Heart right ventricle (tissue), 16 donors: ENCODE measurements at regions of chr17 and their contacts with region 1.

Region 1: DNA sequence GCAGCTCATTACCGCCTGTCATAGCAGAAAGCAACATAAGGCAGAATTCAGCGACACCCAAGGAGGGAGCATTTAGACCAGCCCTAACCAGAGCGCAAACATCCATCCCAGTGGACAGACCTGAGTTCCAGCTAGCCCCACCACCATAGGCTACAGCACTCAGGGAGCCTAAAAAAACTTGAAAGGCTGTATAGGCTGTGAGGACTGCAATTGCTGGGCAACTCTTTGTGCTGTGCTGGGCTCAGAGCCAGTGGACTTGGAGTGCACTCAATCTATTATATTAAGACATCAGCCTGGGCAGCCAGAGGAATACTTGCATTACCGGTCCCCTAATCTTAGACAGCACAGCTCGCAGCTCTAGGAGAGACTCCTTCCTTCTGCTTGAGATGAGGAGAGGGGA is 207.3 kb downstream of the KIF2B start:
- DNase-seq: no peak
- ATAC-seq: no peak
- H3K4me3 ChIP-seq: no peak overlapping the region
- H3K27ac ChIP-seq: no peak overlapping the region
- H3K4me1 ChIP-seq: no peaks in the 10 kb centered on the region
- H3K27me3 ChIP-seq: no peaks in the 10 kb centered on the region
- CTCF ChIP-seq: no peak

Region 2: DNA sequence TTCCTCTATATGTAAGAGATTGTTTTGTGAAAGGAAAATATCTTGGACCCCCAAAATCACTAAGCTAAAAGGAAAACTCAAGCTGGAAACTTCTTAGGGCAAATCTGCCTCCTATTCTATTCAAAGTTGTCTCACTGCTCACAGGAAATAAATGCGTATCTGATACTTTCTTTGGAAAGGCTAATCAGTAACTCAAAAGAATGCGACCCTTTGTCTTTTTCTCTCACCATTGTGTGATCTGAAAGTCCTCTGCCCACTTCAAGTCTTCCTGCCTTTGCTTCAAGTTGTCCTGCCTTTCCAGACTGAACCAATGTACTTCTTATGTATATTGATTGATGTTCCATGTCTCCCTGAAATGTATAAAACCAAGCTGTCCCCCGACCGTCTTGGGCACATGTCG is 50.0 kb before region 1 on chr17:
- intact Hi-C with region 1: loop called in 1 of 10 experiments (anchors 10 kb)
- DNase-seq: no peak
- ATAC-seq: no peak
- H3K4me3 ChIP-seq: no peak overlapping the region
- H3K27ac ChIP-seq: no peak overlapping the region
- H3K4me1 ChIP-seq: no peaks in the 10 kb centered on the region
- H3K27me3 ChIP-seq: no peaks in the 10 kb centered on the region
- CTCF ChIP-seq: no peak

Region 3: DNA sequence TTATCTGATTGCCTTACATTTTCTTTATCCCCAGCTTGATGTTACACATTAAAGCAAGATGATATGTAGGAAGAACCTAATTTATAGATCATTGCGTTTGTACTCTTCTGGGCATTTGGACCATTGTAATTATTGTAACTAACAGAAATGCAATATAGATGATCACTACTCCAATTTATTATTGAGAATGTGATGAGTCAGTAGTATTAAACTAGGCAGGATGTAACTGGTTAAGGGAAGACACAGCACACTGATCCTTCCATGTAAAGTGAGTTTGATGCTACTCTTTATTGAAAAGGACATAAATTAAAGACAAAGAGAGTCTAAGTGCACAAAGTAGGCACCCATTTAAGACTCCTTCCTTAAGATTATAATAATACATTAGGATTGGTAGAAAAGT is 16.6 kb after region 1 on chr17:
- intact Hi-C with region 1: no loop called
- DNase-seq: no peak
- ATAC-seq: no peak
- H3K4me3 ChIP-seq: no peak overlapping the region
- H3K27ac ChIP-seq: no peak overlapping the region
- H3K4me1 ChIP-seq: no peaks in the 10 kb centered on the region
- H3K27me3 ChIP-seq: no peaks in the 10 kb centered on the region
- CTCF ChIP-seq: no peak

Region 4: GRCh38 chr17:54085020-54085419 is 55.0 kb after region 1 on chr17:
- intact Hi-C with region 1: no loop called
- DNase-seq: no peak
- ATAC-seq: no peak
- H3K4me3 ChIP-seq: no peak overlapping the region
- H3K27ac ChIP-seq: no peak overlapping the region
- H3K4me1 ChIP-seq: no peaks in the 10 kb centered on the region
- H3K27me3 ChIP-seq: no peaks in the 10 kb centered on the region
- CTCF ChIP-seq: no peak

Region 5: DNA sequence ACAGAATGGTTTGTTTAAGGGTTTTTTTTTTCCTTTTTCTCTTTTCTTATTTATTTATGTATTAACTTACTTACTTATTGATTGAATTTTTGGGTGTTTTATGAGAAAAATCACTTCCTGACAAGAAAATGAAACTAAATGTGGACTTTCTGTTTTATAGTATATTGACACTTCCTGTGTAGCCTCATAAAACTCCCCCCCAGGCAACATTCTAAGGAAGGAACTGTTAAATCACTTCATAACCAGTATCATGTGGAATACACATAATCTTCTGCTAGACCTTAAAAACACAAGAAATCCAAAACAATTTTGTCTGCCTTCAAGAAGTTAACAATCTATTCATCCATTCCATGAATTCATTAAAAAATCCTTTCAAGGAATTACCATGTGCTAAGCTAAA is 706.6 kb after region 1 on chr17:
- intact Hi-C with region 1: no loop called
- DNase-seq: no peak
- ATAC-seq: no peak
- H3K4me3 ChIP-seq: no peak overlapping the region
- H3K27ac ChIP-seq: no peak overlapping the region
- H3K4me1 ChIP-seq: no peaks in the 10 kb centered on the region
- H3K27me3 ChIP-seq: no peaks in the 10 kb centered on the region
- CTCF ChIP-seq: no peak